Aorta (tissue), 5 donors: ENCODE measurements at regions of chr1 and their contacts with region 1.

Region 1: DNA sequence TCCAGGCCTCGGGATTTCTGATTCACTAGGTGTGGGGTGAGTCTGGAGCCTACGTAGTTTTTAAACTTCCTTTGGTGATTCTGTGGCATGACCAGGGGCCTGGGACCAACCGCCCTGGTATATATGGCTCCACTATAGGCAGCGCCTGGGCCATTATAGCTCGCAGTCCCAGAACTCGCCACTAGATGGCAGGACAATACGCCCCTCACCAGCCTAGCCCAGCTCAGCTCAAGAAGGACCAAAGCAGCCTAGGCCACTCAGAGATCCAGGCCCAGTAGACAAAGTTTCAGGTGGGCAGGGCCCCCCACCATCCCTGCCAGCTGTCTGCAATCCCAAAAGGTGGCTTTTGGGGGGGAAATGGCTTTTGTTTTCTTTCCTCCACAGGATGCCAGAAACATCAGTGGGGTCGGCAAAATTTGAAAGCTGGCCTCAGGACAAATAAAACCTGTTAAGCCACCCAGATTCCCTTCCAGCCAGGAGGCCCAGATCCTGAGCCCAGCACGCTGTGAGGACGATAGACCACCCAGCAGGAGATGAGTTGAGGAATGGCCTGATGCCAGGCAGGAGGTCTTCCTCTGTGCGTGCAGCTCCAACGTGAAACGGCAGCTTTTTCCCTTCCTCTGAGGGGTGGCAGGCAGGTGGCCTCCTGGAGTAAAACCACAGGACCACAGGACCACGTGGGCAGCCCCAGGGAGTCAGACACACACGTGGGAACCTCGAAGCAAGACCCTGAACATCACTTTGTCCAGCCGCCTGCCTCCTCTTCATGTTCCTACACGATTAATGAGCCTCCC is 24.8 kb upstream of the TMEM51 start:
- DNase-seq: peak; percentile 75 to 86
- ATAC-seq: peak; percentile 89
- H3K4me3 ChIP-seq: no peak overlapping the region
- H3K27ac ChIP-seq: no peak overlapping the region
- H3K4me1 ChIP-seq: no peaks in the 10 kb centered on the region
- H3K27me3 ChIP-seq: no peaks in the 10 kb centered on the region

Region 2: GRCh38 chr1:15272009-15272788 is 143.5 kb after region 1 on chr1:
- intact Hi-C with region 1: loop called (anchors 1 to 2 kb)
- DNase-seq: peak in 1 of 2 donors; percentile 76
- ATAC-seq: peak; percentile 85
- H3K4me3 ChIP-seq: no peak overlapping the region
- H3K27ac ChIP-seq: no peak overlapping the region
- H3K4me1 ChIP-seq: no peaks in the 10 kb centered on the region
- H3K27me3 ChIP-seq: no peaks in the 10 kb centered on the region

Region 3: DNA sequence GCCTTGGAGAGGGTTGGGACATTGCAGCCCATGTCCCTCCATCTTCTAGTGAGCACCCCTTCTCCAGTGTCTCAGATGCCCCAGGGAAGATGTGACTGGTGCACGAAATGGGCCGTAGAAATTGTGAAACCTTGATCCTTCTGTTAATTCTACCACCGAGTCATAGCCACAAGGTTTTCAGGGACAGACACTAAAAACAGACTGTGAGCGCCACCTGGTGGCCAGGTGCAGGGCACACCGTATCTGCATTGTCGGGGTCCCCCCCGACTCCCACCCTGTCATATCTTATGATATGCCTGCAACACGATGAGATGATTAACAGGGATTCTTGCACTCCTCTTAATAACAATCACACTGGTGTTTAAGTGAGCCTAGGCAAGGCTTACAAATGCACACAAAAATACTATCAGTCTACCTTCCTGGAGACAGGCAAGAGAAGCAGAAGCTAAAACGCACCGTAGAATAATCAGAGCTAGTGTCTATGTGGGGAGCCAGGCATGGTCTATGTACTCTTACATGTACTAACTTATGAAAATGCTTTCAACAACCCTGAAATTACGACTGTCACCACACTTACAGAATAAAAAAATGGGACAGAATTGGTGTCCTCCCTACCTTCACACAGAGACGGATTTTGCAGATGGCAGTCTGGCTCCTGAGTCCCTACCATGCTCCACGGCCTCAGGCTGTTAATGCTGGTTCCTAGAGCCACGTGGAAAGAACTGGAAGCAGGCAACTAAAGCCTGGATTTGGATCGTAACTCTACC is 176.2 kb after region 1 on chr1:
- intact Hi-C with region 1: loop called in 1 of 2 experiments (anchors 2 kb)
- DNase-seq: peak in 1 of 2 donors; percentile 87
- ATAC-seq: no peak
- H3K4me3 ChIP-seq: no peak overlapping the region
- H3K27ac ChIP-seq: no peak overlapping the region
- H3K4me1 ChIP-seq: no peaks in the 10 kb centered on the region
- H3K27me3 ChIP-seq: no peaks in the 10 kb centered on the region